ENCODE measurements at regions of chr3 and their contacts with region 1.

Region 1: GRCh38 chr3:50542177-50543034 is 25.1 kb downstream of the C3orf18 start:
- DNase-seq: peak; percentile 50 to 68 (median 53)
- H3K4me3 ChIP-seq: no peak overlapping the region
- H3K4me3 Mint-ChIP-seq: no peak overlapping the region
- H3K27ac ChIP-seq: no peak overlapping the region
- H3K27ac Mint-ChIP-seq: no peak overlapping the region
- H3K4me1 ChIP-seq: no peaks in the 10 kb centered on the region
- H3K4me1 Mint-ChIP-seq: peaks cover 0 to 2% (median 0%) of the 10 kb centered on the region in 3 donors
- H3K27me3 ChIP-seq: no peaks in the 10 kb centered on the region
- H3K27me3 Mint-ChIP-seq: peaks cover 8 to 19% of the 10 kb centered on the region in 2 donors

Region 2: DNA sequence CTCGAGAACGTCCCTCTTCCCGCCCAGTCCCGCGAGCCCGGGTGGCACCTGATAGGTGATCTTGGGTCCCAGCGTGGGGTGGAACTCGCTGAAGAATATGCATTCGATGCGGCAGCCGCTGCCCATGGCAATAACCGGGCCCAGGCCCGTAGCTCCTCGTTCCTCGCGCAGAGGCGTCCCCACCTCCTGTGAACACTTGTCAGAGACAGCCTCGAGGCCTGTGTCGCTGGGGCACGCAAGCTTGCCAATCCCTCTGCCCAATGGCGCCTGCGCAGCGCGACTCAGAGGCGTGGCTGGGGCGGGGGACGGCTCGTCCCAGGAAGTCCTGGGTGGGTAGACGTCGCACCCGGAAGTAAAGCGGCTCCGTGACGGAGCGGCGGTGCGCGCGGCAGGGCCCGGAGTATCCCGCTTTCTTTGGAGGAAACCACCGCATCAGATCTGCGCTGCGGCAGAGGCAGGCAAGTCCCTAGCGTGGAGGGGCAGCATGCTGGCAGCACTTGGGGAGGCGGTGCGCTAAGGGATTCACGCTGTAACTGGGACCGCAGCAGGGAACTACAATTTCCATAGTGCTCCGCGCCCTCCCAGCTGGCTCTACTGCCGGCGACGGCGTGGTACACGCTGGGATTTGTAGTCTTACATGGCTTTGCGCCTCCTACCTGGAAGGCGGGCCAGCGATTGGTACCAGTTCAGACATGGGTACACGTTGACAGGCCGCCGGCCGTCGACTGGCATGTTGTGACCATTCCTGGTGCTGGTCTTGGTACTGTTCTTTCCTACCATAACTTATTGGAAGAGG is 191.7 kb before region 1 on chr3 and contains the starts of genes CYB561D2 and NPRL2:
- CTCF ChIA-PET with region 1: interaction called, 51 read pairs
- POLR2A ChIA-PET with region 1: interaction called, 10 read pairs
- DNase-seq: peak; percentile 98 to 100 (median 99)
- H3K4me3 ChIP-seq: peak within 1 kb of the TSS; percentile 100
- H3K4me3 Mint-ChIP-seq: peak within 1 kb of the TSS; percentile 96 to 99 (median 98)
- H3K27ac ChIP-seq: peak within 1 kb of the TSS; percentile 95
- H3K27ac Mint-ChIP-seq: peak within 1 kb of the TSS; percentile 97 to 99 (median 98)
- H3K4me1 ChIP-seq: peaks cover 55% of the 10 kb centered on the region
- H3K4me1 Mint-ChIP-seq: peaks cover 48 to 82% (median 52%) of the 10 kb centered on the region in 3 donors
- H3K27me3 ChIP-seq: no peaks in the 10 kb centered on the region
- H3K27me3 Mint-ChIP-seq: no peaks in the 10 kb centered on the region
- total RNA-seq, gene CYB561D2: 32.4 to 37.7 TPM
- total RNA-seq, gene NPRL2: 44.6 to 48.0 TPM

Region 3: DNA sequence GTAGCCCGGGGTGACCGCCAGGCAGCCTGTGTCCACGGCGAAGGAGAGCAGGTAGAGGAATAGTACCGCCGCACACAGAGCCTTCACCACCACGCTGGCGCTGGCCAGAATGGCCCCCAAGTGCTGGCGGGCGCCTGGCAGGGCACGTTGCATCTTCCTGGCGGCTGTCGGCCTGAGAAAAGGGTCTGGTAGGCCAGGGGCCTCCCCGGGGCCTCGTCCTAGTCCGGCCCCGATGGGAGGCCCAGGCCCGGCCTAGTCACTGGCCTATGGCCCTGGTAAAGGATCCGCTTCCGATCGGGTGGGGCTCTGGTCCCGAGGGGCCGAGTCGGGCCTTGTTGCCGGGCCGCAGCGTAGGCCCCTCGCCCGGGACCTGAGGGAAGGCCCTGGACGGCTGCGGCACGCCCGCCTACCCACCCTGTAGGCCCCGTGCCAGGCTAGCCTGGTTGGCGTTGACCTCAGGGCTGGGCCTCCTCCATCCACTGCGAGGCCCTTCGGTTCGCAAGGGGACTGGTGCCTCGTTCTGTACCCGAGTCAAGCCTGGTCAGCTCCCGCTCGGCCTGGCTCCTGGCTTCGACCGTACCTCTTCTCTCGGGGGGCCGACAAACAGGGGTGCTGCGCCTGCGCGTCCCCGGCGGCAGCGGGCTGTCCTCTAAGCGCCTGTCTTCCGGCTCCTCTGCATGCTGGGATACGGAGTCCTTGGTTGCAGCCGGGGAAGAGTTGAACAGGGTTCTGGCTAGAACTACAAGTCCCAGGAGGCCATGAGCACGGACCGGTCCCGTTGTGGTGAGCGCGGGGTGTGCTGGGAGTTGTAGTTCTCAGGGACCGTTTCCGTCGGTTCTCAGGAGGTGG is 183.3 kb before region 1 on chr3 and contains the start of gene TMEM115:
- CTCF ChIA-PET with region 1: interaction called, 11 read pairs
- POLR2A ChIA-PET with region 1: no interaction called
- DNase-seq: peak; percentile 91 to 98 (median 94)
- H3K4me3 ChIP-seq: peak within 1 kb of the TSS; percentile 95
- H3K4me3 Mint-ChIP-seq: peak within 1 kb of the TSS; percentile 94 to 99 (median 96)
- H3K27ac ChIP-seq: peak within 1 kb of the TSS; percentile 76
- H3K27ac Mint-ChIP-seq: peak within 1 kb of the TSS; percentile 81 to 99 (median 96)
- H3K4me1 ChIP-seq: peaks cover 38% of the 10 kb centered on the region
- H3K4me1 Mint-ChIP-seq: peaks cover 36 to 63% (median 40%) of the 10 kb centered on the region in 3 donors
- H3K27me3 ChIP-seq: no peaks in the 10 kb centered on the region
- H3K27me3 Mint-ChIP-seq: peaks cover 0 to 2% of the 10 kb centered on the region in 2 donors
- total RNA-seq, gene TMEM115: 30.5 to 33.2 TPM

Region 4: DNA sequence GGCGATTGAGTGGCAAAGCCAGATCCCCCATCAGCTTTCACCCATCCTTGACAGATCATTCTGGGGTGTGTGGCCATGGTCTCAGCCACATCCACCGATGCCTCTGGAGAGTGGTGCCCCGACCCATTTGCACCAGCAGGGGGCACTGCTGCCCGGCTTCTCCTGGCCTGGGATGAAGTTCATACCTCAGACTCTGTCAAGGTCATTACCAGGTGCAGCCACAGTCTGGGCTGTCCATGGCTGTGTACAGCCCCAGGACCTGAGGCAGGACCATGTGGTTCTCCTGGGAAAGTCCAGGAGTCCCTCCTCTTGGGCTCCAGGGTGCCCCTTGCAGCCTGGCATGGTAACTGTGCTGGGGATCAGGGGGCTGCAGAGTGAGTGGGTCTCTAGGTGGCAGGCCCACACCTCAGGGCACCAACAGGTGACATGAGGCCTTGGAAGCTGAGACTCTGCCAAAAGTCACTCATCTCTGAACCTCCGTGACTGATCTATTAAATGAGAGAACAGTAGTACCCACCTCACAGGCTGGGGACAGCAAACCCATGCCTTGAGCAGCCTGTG is 106.2 kb before region 1 on chr3:
- CTCF ChIA-PET with region 1: interaction called, 37 read pairs
- POLR2A ChIA-PET with region 1: no interaction called
- DNase-seq: peak; percentile 62 to 82 (median 68)
- H3K4me3 ChIP-seq: no peak overlapping the region
- H3K4me3 Mint-ChIP-seq: peak overlapping the region in 1 of 7 donors; percentile 38
- H3K27ac ChIP-seq: no peak overlapping the region
- H3K27ac Mint-ChIP-seq: peak overlapping the region in 5 of 8 donors; percentile 17 to 74 (median 61)
- H3K4me1 ChIP-seq: peaks cover 8% of the 10 kb centered on the region
- H3K4me1 Mint-ChIP-seq: peaks cover 14 to 32% (median 18%) of the 10 kb centered on the region in 3 donors
- H3K27me3 ChIP-seq: no peaks in the 10 kb centered on the region
- H3K27me3 Mint-ChIP-seq: no peaks in the 10 kb centered on the region

Region 5: GRCh38 chr3:50580683-50581458 is 38.5 kb after region 1 on chr3:
- CTCF ChIA-PET with region 1: no interaction called
- POLR2A ChIA-PET with region 1: no interaction called
- DNase-seq: no peak
- H3K4me3 ChIP-seq: no peak overlapping the region
- H3K4me3 Mint-ChIP-seq: no peak overlapping the region
- H3K27ac ChIP-seq: no peak overlapping the region
- H3K27ac Mint-ChIP-seq: peak overlapping the region in 5 of 8 donors; percentile 40 to 77 (median 66)
- H3K4me1 ChIP-seq: peaks cover 50% of the 10 kb centered on the region
- H3K4me1 Mint-ChIP-seq: peaks cover 32 to 66% (median 36%) of the 10 kb centered on the region in 3 donors
- H3K27me3 ChIP-seq: no peaks in the 10 kb centered on the region
- H3K27me3 Mint-ChIP-seq: no peaks in the 10 kb centered on the region

Measured in CD8-positive, alpha-beta memory T cell (primary cell).